Sigmoid colon (tissue), 7 donors: ENCODE measurements at regions of chr15 and their contacts with region 1.

Region 1: GRCh38 chr15:98085003-98085639 is 124.6 kb downstream of the ARRDC4 start:
- DNase-seq: no peak
- H3K4me3 ChIP-seq: no peak overlapping the region
- H3K27ac ChIP-seq: peak overlapping the region in 1 of 4 donors; percentile 12
- H3K4me1 ChIP-seq: peaks cover 0 to 14% (median 3%) of the 10 kb centered on the region in 4 donors
- H3K27me3 ChIP-seq: no peaks in the 10 kb centered on the region
- CTCF ChIP-seq: peak; percentile 51 to 69 (median 62)
- EP300 ChIP-seq: no peak
- POLR2A ChIP-seq: no peak

Region 2: GRCh38 chr15:97960364-97961066 is 124.6 kb before region 1 on chr15 and contains the start of gene ARRDC4:
- intact Hi-C with region 1: loop called (anchors 2 kb)
- DNase-seq: peak; percentile 100
- H3K4me3 ChIP-seq: peak within 1 kb of the TSS; percentile 71 to 91 (median 84)
- H3K27ac ChIP-seq: peak within 1 kb of the TSS; percentile 94 to 98 (median 98)
- H3K4me1 ChIP-seq: peaks cover 0 to 40% (median 36%) of the 10 kb centered on the region in 4 donors
- H3K27me3 ChIP-seq: no peaks in the 10 kb centered on the region
- CTCF ChIP-seq: no peak
- EP300 ChIP-seq: peak in 1 of 4 donors; percentile 33
- POLR2A ChIP-seq: peak; percentile 72 to 82
- total RNA-seq, gene ARRDC4: 116 to 205 (median 170) TPM

Region 3: GRCh38 chr15:98025235-98025634 is 59.9 kb before region 1 on chr15:
- intact Hi-C with region 1: loop called (anchors 5 kb)
- DNase-seq: no peak
- H3K4me3 ChIP-seq: no peak overlapping the region
- H3K27ac ChIP-seq: peak overlapping the region; percentile 70 to 80 (median 73)
- H3K4me1 ChIP-seq: peaks cover 0 to 33% (median 19%) of the 10 kb centered on the region in 4 donors
- H3K27me3 ChIP-seq: no peaks in the 10 kb centered on the region
- CTCF ChIP-seq: no peak
- EP300 ChIP-seq: peak in 3 of 4 donors; percentile 17 to 68 (median 30)
- POLR2A ChIP-seq: no peak

Region 4: GRCh38 chr15:98131924-98132323 is 46.8 kb after region 1 on chr15:
- intact Hi-C with region 1: no loop called
- DNase-seq: no peak
- H3K4me3 ChIP-seq: no peak overlapping the region
- H3K27ac ChIP-seq: no peak overlapping the region
- H3K4me1 ChIP-seq: no peaks in the 10 kb centered on the region
- H3K27me3 ChIP-seq: no peaks in the 10 kb centered on the region
- CTCF ChIP-seq: no peak
- EP300 ChIP-seq: no peak
- POLR2A ChIP-seq: no peak

Region 5: DNA sequence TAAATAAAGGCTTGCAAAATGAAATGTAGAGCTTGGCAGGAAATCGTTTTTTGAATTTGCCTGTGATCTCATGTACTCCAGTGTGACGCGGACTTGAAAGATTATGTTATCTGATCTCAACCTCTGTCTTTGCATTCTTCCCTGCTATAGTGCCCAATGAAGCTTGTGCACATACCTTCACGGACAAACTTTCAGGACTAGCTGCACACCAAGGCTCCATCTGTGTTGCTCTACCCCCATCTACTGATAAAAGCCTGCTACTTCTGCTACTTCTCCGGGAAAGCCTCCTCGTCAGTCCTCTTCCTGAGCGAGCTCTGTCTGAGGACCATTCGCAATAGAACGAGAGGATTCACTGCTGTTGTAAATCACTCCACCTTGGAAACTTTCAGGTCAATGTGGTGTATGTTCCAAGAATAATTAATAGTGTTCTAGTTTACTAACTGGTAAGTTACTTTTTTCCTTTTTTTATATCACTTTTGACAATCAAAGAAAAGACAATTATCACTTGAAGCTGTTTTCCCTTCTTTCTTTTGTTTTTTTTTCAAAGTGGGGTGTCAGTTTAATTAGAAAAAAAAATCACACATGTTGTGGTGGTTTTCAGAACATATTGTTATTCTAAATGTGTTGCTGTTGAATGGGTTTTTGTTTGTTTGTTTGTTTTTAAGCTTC is 92.9 kb after region 1 on chr15:
- intact Hi-C with region 1: loop called (anchors 5 kb)
- DNase-seq: peak; percentile 73
- H3K4me3 ChIP-seq: no peak overlapping the region
- H3K27ac ChIP-seq: no peak overlapping the region
- H3K4me1 ChIP-seq: no peaks in the 10 kb centered on the region
- H3K27me3 ChIP-seq: no peaks in the 10 kb centered on the region
- CTCF ChIP-seq: peak; percentile 51 to 86 (median 74)
- EP300 ChIP-seq: no peak
- POLR2A ChIP-seq: no peak